GM10248 (cell line): ENCODE measurements at regions of chr12 and their contacts with region 1.

Region 1: GRCh38 chr12:23128462-23128861 is 503.5 kb downstream of the ETNK1 start:
- DNase-seq: no peak
- CTCF ChIP-seq: no peak

Region 2: DNA sequence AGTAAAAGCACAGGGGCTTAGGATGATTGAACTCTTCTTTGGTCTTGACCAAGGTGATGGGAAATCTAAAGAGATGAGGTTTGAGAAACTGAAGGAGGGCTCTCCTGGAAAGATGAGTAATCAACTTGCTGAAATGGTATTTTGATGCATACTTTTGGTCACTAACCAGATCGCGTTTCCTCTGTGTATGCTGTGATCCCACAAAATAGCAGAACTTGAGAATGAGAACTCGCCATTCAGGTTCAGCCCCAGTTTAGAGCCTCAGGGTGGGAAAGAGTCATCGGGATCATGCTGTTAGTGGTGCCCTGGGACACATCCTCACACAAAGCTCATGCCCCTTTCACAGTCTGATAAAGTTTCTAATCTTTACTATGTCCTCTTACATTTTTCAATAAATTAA is 14.7 kb before region 1 on chr12:
- CTCF ChIA-PET with region 1: interaction called, 11 read pairs
- POLR2A ChIA-PET with region 1: no interaction called
- DNase-seq: no peak
- CTCF ChIP-seq: no peak